Upper lobe of right lung (tissue), 1 donor: ENCODE measurements at regions of chr7 and their contacts with region 1.

Region 1: DNA sequence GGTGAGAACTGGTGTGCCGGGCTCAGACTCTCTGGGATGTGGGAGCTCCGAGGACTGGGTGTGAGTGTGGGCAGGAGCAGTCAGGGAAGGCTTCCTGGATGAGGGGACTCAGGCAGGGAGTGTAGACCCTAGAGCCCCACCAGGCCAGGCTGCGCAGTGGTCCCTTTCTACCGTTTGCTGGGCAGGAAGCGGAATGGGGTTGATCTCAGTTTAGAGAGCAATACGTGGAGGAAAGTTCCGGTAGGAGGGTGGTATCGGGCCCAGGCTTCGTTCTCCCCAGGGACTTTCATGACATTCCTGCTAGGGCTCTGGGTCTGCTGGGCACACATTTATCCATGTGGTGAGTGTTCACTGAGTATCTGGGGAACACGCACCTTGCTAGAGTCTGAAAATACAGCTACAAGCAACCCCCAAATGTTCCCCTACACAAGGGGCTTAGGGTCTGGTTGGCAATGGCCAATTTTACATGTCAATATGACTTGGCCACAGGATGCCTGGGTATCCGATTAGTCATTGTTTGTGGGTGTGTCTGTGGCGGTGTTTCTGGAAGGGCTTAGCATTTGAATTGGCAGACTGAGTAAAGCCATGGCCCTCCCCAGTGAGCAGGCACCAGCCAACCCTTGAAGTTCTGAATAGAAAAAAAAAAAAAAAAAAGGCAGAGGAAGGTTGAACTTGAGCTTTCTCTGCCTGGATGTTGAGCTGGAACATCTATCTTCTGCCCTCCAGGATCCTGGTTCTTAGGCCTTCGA is 20.8 kb downstream of the GHRHR start:
- DNase-seq: no peak
- ATAC-seq: no peak
- H3K4me3 ChIP-seq: no peak overlapping the region
- H3K27ac ChIP-seq: no peak overlapping the region
- H3K4me1 ChIP-seq: peaks cover 12% of the 10 kb centered on the region
- H3K27me3 ChIP-seq: no peaks in the 10 kb centered on the region
- CTCF ChIP-seq: no peak

Region 2: GRCh38 chr7:30740424-30741181 is 243.9 kb before region 1 on chr7:
- intact Hi-C with region 1: no loop called
- DNase-seq: peak; percentile 86
- ATAC-seq: peak; percentile 88
- H3K4me3 ChIP-seq: no peak overlapping the region
- H3K27ac ChIP-seq: no peak overlapping the region
- H3K4me1 ChIP-seq: no peaks in the 10 kb centered on the region
- H3K27me3 ChIP-seq: no peaks in the 10 kb centered on the region
- CTCF ChIP-seq: peak; percentile 99

Region 3: GRCh38 chr7:31122649-31123058 is 138.1 kb after region 1 on chr7:
- intact Hi-C with region 1: loop called (anchors 5 kb)
- DNase-seq: no peak
- ATAC-seq: peak; percentile 92
- H3K4me3 ChIP-seq: no peak overlapping the region
- H3K27ac ChIP-seq: no peak overlapping the region
- H3K4me1 ChIP-seq: peaks cover 3% of the 10 kb centered on the region
- H3K27me3 ChIP-seq: no peaks in the 10 kb centered on the region
- CTCF ChIP-seq: peak; percentile 78

Region 4: GRCh38 chr7:31311552-31311951 is 327.0 kb after region 1 on chr7:
- intact Hi-C with region 1: no loop called
- DNase-seq: no peak
- ATAC-seq: no peak
- H3K4me3 ChIP-seq: no peak overlapping the region
- H3K27ac ChIP-seq: no peak overlapping the region
- H3K4me1 ChIP-seq: no peaks in the 10 kb centered on the region
- H3K27me3 ChIP-seq: no peaks in the 10 kb centered on the region
- CTCF ChIP-seq: no peak